Activated B cell treated with CpG ODN at 0.5 μM for 24 hours (primary cell): ENCODE measurements at regions of chr14 and their contacts with region 1.

Region 1: DNA sequence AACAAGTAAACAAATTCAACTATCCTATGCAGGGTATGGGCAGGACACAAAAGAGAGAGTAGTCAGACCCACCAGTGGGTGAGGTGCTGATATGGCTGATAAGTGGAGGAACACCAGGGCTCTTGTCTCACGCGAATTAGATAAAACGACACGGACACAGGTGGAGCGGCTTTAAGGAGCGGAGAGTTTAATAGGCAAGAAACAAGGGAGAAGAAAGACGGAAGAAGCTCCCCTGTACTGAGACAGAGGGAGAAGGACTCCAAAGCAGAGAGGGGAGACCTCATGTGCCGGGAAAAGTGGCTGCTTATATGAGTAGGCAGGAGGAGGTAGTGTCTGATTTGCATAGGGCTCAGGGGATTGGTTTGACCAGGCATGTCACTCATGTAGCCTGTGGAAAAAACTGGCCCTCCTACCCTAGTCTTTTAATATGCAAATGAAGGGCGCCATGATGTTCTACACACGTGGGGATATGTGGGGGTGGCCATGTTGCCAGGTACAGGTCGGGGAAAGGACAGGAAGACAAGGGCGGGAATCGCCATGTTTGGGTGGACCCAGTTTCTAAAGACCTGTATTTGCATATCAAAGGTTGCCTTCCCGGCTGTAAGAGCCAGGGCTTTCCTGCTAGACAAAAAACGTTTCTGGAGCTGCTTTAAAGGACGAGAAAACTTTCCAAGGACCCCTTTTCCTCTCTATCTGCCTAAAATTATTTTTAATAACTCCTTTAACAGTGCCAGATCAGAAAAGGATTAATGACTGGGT is 28.8 kb downstream of the RPGRIP1 start:
- DNase-seq: peak; percentile 51
- ATAC-seq: peak; percentile 85
- H3K4me3 Mint-ChIP-seq: peak overlapping the region; percentile 87
- H3K27ac Mint-ChIP-seq: peak overlapping the region; percentile 93
- H3K4me1 Mint-ChIP-seq: peaks cover 26% of the 10 kb centered on the region
- H3K27me3 Mint-ChIP-seq: no peaks in the 10 kb centered on the region
- CTCF ChIP-seq: no peak

Region 2: GRCh38 chr14:21263656-21264411 is 44.8 kb before region 1 on chr14:
- CTCF ChIA-PET with region 1: no interaction called
- POLR2A ChIA-PET with region 1: interaction called, 31 read pairs
- intact Hi-C with region 1: loop called (anchors 1 kb)
- DNase-seq: no peak
- ATAC-seq: peak; percentile 68
- H3K4me3 Mint-ChIP-seq: peak overlapping the region; percentile 100
- H3K27ac Mint-ChIP-seq: peak overlapping the region; percentile 87
- H3K4me1 Mint-ChIP-seq: peaks cover 78% of the 10 kb centered on the region
- H3K27me3 Mint-ChIP-seq: no peaks in the 10 kb centered on the region
- CTCF ChIP-seq: no peak

Region 3: GRCh38 chr14:21275261-21275858 is 33.3 kb before region 1 on chr14:
- CTCF ChIA-PET with region 1: no interaction called
- POLR2A ChIA-PET with region 1: interaction called, 14 read pairs
- intact Hi-C with region 1: no loop called
- DNase-seq: no peak
- ATAC-seq: no peak
- H3K4me3 Mint-ChIP-seq: no peak overlapping the region
- H3K27ac Mint-ChIP-seq: no peak overlapping the region
- H3K4me1 Mint-ChIP-seq: peaks cover 4% of the 10 kb centered on the region
- H3K27me3 Mint-ChIP-seq: no peaks in the 10 kb centered on the region
- CTCF ChIP-seq: no peak

Region 4: GRCh38 chr14:21352587-21352986 is 43.9 kb after region 1 on chr14:
- CTCF ChIA-PET with region 1: no interaction called
- POLR2A ChIA-PET with region 1: interaction called, 4 read pairs
- intact Hi-C with region 1: loop called (anchors 5 kb)
- DNase-seq: no peak
- ATAC-seq: peak; percentile 94
- H3K4me3 Mint-ChIP-seq: peak overlapping the region; percentile 61
- H3K27ac Mint-ChIP-seq: peak overlapping the region; percentile 87
- H3K4me1 Mint-ChIP-seq: peaks cover 17% of the 10 kb centered on the region
- H3K27me3 Mint-ChIP-seq: no peaks in the 10 kb centered on the region
- CTCF ChIP-seq: no peak

Region 5: GRCh38 chr14:21455911-21456667 is 147.4 kb after region 1 on chr14 and contains the start of gene CHD8:
- CTCF ChIA-PET with region 1: no interaction called
- POLR2A ChIA-PET with region 1: no interaction called
- intact Hi-C with region 1: loop called (anchors 1 kb)
- DNase-seq: peak; percentile 91
- ATAC-seq: peak; percentile 97
- H3K4me3 Mint-ChIP-seq: peak within 1 kb of the TSS; percentile 98
- H3K27ac Mint-ChIP-seq: peak within 1 kb of the TSS; percentile 99
- H3K4me1 Mint-ChIP-seq: peaks cover 34% of the 10 kb centered on the region
- H3K27me3 Mint-ChIP-seq: no peaks in the 10 kb centered on the region
- CTCF ChIP-seq: no peak
- total RNA-seq, gene CHD8: 113 and 133 TPM in 2 replicates

Region 6: GRCh38 chr14:22070119-22071011 is 761.7 kb after region 1 on chr14:
- CTCF ChIA-PET with region 1: no interaction called
- POLR2A ChIA-PET with region 1: no interaction called
- intact Hi-C with region 1: loop called (anchors 10 kb)
- DNase-seq: peak; percentile 16
- ATAC-seq: peak; percentile 26
- H3K4me3 Mint-ChIP-seq: peak overlapping the region; percentile 55
- H3K27ac Mint-ChIP-seq: no peak overlapping the region
- H3K4me1 Mint-ChIP-seq: peaks cover 23% of the 10 kb centered on the region
- H3K27me3 Mint-ChIP-seq: peaks cover 52% of the 10 kb centered on the region
- CTCF ChIP-seq: no peak

Region 7: GRCh38 chr14:22333422-22334276 is 1025.0 kb after region 1 on chr14:
- CTCF ChIA-PET with region 1: no interaction called
- POLR2A ChIA-PET with region 1: no interaction called
- intact Hi-C with region 1: no loop called
- DNase-seq: no peak
- ATAC-seq: no peak
- H3K4me3 Mint-ChIP-seq: no peak overlapping the region
- H3K27ac Mint-ChIP-seq: no peak overlapping the region
- H3K4me1 Mint-ChIP-seq: no peaks in the 10 kb centered on the region
- H3K27me3 Mint-ChIP-seq: no peaks in the 10 kb centered on the region
- CTCF ChIP-seq: no peak